Activated naive CD4-positive, alpha-beta T cell treated with anti-CD3 and anti-CD28 coated beads for 36 hours (primary cell): ENCODE measurements at regions of chr6 and their contacts with region 1.

Region 1: GRCh38 chr6:107964671-107965340 is 6.8 kb upstream of the SEC63 start:
- DNase-seq: peak; percentile 90
- H3K4me3 Mint-ChIP-seq: no peak overlapping the region
- H3K27ac Mint-ChIP-seq: peak overlapping the region; percentile 92
- H3K4me1 Mint-ChIP-seq: peaks cover 21% of the 10 kb centered on the region
- H3K27me3 Mint-ChIP-seq: no peaks in the 10 kb centered on the region

Region 2: DNA sequence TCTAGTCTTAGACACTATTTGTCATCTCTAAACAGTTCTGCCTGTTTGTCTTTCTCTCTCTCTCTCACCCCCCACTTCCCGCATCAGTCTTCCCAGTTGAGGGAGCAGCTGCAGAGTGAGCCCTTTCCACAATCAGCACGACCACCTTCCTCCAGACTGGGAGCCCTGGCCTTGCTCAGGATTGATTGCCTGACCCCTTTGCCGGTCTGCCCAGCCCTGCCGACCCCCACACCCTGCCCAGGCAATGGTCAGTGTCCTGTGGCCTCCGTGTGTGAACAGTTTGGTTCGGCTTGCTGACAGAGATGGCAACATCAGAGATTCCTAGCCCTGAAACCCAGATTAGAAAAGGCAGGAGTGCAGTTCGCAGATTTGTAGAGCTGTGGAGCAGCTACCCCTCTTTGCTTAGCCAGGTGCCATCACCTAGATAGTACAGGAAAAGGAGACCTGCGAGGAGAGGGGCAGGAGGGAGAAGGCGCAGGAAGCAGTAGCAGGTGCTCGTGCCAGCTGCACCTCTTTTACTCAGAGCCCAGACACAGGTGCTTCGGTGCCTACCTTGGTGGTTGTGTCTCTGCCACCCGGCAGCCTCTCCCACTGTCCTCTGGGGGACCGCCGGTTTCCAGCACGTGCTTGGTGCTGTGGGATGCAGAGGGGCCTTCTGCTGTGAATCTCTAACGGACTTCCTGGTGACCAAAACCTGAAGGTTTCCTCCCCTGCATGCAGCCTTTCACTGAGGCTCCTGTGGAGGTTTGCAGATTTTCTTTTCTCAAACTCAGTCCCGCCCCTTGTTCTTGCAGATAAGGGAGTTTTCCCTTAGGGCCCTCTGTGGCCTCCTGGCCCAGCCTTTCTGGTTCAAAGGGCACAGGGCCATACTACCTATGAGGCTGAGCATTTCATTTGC is 233.1 kb before region 1 on chr6:
- CTCF ChIA-PET with region 1: no interaction called
- intact Hi-C with region 1: loop called (anchors 1 kb)
- DNase-seq: peak; percentile 43
- H3K4me3 Mint-ChIP-seq: peak overlapping the region; percentile 80
- H3K27ac Mint-ChIP-seq: peak overlapping the region; percentile 86
- H3K4me1 Mint-ChIP-seq: peaks cover 74% of the 10 kb centered on the region
- H3K27me3 Mint-ChIP-seq: no peaks in the 10 kb centered on the region

Region 3: DNA sequence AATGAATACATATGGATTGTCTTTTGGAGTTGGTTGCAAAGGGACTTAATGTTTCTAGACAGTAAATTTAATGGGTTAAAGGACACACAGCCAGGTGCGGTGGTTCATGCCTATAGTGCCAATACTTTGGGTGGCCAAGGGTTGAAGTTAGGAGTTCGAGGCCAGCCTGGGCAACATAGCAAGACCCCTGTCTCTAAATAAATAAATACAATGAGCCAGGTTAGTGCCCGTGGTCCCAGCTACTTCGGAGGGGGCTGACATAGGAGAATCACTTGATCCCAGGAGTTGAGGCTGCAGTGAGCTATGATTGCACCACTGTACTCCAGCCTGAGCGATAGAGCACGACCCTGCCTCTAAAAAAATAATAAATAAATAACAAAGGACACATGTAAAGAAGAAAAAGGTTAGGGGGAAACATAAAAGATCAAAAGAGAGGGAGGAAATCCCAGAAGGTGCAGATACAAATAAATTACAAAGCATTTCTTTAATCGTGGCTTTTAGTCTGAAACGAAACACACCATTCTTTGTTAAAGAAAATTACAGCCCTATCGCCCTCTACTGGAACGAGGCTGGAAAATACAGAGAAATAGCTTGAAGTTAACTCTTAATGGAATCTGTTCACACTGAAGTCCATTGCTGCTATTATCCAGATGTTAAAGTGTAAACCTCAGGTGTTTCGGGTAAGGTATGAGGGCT is 98.1 kb before region 1 on chr6:
- CTCF ChIA-PET with region 1: no interaction called
- intact Hi-C with region 1: loop called (anchors 2 kb)
- DNase-seq: peak; percentile 56
- H3K4me3 Mint-ChIP-seq: no peak overlapping the region
- H3K27ac Mint-ChIP-seq: no peak overlapping the region
- H3K4me1 Mint-ChIP-seq: peaks cover 35% of the 10 kb centered on the region
- H3K27me3 Mint-ChIP-seq: no peaks in the 10 kb centered on the region

Region 4: DNA sequence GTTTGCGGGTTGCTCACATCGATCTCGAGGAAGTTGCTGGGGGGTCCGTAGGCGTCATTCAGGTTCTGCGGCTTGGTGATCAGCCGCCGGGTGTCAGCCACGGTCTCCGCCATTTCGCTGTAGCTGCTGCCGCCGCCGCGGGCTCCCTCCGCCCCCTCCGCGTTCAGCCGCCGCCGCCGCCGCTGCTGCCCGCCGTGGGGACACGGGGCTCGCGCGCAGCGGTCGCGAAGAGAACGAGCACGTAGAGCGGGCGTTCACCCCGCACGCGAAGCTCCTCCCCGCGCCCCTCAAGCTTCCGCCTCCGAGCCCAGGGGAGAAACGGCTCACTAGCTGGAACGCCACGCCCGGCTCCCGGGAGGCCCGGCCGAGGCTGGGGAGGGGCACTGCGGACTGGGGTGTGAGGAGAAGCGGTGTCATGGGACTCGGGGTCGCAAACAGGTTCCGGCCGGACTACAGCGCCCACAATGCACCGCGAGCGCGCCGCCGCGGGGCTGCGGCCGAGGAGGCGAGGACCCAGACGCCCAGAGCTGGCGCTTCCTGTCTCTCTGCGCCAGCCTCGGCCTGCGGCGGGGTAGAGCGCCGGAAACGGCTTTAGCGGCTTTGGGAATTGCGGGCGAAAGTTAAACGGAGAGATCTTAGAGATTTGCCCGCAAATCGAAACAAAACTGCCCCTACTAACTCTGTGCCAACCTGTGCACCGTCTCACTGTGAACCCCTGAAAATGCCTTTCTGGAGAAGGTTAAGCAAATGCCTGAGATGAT is 296.2 kb after region 1 on chr6 and contains the start of gene SNX3:
- CTCF ChIA-PET with region 1: no interaction called
- intact Hi-C with region 1: no loop called
- DNase-seq: peak; percentile 90
- H3K4me3 Mint-ChIP-seq: peak within 1 kb of the TSS; percentile 77
- H3K27ac Mint-ChIP-seq: peak within 1 kb of the TSS; percentile 89
- H3K4me1 Mint-ChIP-seq: peaks cover 19% of the 10 kb centered on the region
- H3K27me3 Mint-ChIP-seq: no peaks in the 10 kb centered on the region
- total RNA-seq, gene SNX3: 59.9 to 65.7 TPM

Region 5: GRCh38 chr6:108874470-108875160 is 909.8 kb after region 1 on chr6:
- CTCF ChIA-PET with region 1: no interaction called
- intact Hi-C with region 1: loop called (anchors 2 kb)
- DNase-seq: peak; percentile 80
- H3K4me3 Mint-ChIP-seq: peak overlapping the region; percentile 20
- H3K27ac Mint-ChIP-seq: no peak overlapping the region
- H3K4me1 Mint-ChIP-seq: peaks cover 22% of the 10 kb centered on the region
- H3K27me3 Mint-ChIP-seq: peaks cover 2% of the 10 kb centered on the region